Esophagus squamous epithelium (tissue), 5 donors: ENCODE measurements at regions of chr1 and their contacts with region 1.

Region 1: DNA sequence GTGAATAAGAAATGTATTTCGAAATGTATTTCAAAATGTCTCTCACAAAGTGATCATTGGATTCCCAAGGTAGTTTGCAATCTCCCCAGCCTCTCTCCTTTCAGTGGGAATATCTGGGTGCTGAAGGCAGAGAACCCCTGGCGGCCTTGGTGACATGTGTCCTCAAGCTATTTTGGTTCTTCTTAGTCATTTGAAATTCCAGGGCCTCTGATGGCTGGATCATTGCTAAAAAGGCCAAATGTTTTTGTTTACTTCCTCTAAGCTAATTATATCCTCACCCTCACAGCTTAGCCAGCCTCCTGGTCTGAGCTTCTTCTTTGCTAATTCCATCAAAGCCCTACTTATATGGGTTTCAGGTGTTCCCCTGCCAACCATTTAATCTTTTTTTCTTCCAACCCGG is 71.2 kb downstream of the LRRC40 start:
- DNase-seq: no peak
- H3K4me3 ChIP-seq: no peak overlapping the region
- H3K27ac ChIP-seq: peak overlapping the region in 1 of 4 donors; percentile 9
- H3K4me1 ChIP-seq: peaks cover 0 to 8% (median 0%) of the 10 kb centered on the region in 3 donors
- H3K27me3 ChIP-seq: no peaks in the 10 kb centered on the region
- CTCF ChIP-seq: no peak
- POLR2A ChIP-seq: no peak

Region 2: DNA sequence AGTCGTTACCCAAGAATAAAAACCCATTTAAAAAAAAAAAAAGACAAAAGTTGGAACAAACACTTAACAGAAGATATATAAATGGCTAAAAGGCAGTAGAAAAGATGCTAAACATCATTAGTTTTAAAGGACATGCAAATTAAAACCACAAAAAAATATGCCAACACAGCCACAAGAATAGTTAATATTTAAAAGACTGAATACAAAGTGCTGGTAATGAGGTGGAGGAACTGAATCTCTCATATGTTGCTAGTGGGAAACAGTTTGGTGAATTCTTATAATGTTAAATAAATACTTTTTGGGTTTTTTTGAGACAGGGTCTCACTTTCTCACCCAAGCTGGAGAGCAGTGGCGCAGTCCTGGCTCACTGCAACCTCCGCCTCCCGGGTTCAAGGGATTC is 61.2 kb after region 1 on chr1:
- intact Hi-C with region 1: no loop called
- DNase-seq: no peak
- H3K4me3 ChIP-seq: no peak overlapping the region
- H3K27ac ChIP-seq: no peak overlapping the region
- H3K4me1 ChIP-seq: no peaks in the 10 kb centered on the region
- H3K27me3 ChIP-seq: no peaks in the 10 kb centered on the region
- CTCF ChIP-seq: no peak
- POLR2A ChIP-seq: no peak

Region 3: GRCh38 chr1:70504176-70504820 is 370.1 kb after region 1 on chr1:
- intact Hi-C with region 1: loop called (anchors 5 kb)
- DNase-seq: no peak
- H3K4me3 ChIP-seq: no peak overlapping the region
- H3K27ac ChIP-seq: no peak overlapping the region
- H3K4me1 ChIP-seq: peaks cover 0 to 7% (median 0%) of the 10 kb centered on the region in 3 donors
- H3K27me3 ChIP-seq: no peaks in the 10 kb centered on the region
- CTCF ChIP-seq: no peak
- POLR2A ChIP-seq: no peak

Region 4: DNA sequence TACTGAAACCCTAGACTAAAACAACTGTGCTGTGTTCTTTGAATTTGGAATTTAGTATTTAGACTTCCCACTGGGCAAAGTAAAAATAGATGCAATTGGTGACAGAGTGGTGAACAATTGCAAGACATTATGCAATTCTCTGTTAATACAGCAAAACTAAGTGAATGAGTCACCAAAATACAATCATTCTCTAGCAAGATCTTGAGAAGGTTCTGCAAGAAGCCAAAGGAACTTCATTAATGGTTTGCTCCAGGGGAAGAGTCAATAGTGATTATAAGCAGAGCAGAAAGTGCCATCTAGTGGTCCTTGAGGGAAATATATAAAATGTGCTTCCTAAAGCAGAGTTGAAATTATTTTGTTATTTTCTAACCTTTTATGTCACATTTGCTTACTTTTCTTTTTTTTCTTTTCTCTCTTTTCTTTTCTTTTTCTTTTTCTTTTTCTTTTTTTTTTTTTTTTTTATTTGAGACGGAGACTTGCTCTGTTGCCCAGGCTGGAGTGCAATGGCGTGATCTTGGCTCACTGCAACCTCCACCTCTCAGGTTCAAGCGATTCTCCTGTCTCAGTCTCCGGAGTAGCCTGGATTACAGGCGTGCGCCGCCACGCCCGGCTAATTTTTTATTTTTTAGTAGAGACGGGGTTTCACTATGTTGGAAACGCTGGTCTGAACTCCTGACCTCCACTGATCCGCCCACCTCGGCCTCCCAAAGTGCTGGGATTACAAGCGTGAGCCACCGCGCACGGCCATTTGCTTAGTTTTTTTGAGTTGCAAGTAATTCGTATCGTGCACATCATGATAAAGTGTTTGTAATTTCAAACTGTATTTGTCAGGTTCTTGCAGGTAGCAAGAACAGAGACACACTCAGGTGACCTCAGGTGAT is 376.1 kb after region 1 on chr1:
- intact Hi-C with region 1: loop called (anchors 5 kb)
- DNase-seq: no peak
- H3K4me3 ChIP-seq: no peak overlapping the region
- H3K27ac ChIP-seq: no peak overlapping the region
- H3K4me1 ChIP-seq: peaks cover 0 to 6% (median 0%) of the 10 kb centered on the region in 3 donors
- H3K27me3 ChIP-seq: no peaks in the 10 kb centered on the region
- CTCF ChIP-seq: peak; percentile 21 to 78 (median 53)
- POLR2A ChIP-seq: no peak